Activated T-helper 2 cell treated with anti-CD3 and anti-CD28 coated beads, Interferon-gamma antibody, Interleukin-2, Interleukin-4, amounts not matched to agents 10 μg/mL and 5 μg/mL and 100 μg/mL, durations not matched to agents 14 hours and 24 hours and 36 hours (primary cell): ENCODE measurements at regions of chr1 and their contacts with region 1.

Region 1: GRCh38 chr1:20194757-20195461 is 8.6 kb upstream of the PLA2G2C start:
- DNase-seq: peak; percentile 50
- H3K4me3 Mint-ChIP-seq: no peak overlapping the region
- H3K27ac Mint-ChIP-seq: no peak overlapping the region
- H3K4me1 Mint-ChIP-seq: no peaks in the 10 kb centered on the region
- H3K27me3 Mint-ChIP-seq: peaks cover 47% of the 10 kb centered on the region

Region 2: GRCh38 chr1:19918057-19918456 is 276.9 kb before region 1 on chr1:
- intact Hi-C with region 1: loop called (anchors 1 kb)
- DNase-seq: peak; percentile 61
- H3K4me3 Mint-ChIP-seq: no peak overlapping the region
- H3K27ac Mint-ChIP-seq: no peak overlapping the region
- H3K4me1 Mint-ChIP-seq: no peaks in the 10 kb centered on the region
- H3K27me3 Mint-ChIP-seq: no peaks in the 10 kb centered on the region

Region 3: DNA sequence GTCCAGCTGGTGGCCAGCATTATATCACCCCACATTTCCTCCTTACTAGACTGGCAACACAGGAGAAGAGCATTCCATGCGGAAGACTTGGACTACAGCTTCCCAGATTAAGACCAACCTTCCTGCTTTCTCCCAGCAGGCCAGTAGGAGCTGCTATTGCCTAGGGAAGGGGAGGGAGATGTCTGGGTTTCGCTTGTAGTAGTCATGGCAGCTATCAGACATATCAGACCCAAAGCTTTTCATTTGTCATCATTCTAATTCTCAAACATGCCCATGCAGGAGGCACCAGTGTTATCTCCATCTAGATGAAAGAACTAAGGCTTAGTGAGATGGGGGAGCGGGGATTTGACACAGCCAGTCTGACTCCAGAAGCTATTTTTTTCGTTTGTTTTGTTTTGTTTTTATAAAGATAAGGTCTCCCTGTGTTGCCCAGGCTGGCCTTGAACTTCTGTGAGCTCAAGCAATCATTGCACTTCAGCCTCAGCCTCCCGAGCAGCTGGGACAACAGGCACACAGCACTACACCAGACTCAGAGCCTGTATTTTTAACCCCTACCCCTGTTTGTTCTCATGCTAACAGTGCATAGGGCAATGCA is 220.0 kb before region 1 on chr1:
- intact Hi-C with region 1: loop called (anchors 2 kb)
- DNase-seq: peak; percentile 14
- H3K4me3 Mint-ChIP-seq: no peak overlapping the region
- H3K27ac Mint-ChIP-seq: no peak overlapping the region
- H3K4me1 Mint-ChIP-seq: peaks cover 4% of the 10 kb centered on the region
- H3K27me3 Mint-ChIP-seq: peaks cover 22% of the 10 kb centered on the region

Region 4: DNA sequence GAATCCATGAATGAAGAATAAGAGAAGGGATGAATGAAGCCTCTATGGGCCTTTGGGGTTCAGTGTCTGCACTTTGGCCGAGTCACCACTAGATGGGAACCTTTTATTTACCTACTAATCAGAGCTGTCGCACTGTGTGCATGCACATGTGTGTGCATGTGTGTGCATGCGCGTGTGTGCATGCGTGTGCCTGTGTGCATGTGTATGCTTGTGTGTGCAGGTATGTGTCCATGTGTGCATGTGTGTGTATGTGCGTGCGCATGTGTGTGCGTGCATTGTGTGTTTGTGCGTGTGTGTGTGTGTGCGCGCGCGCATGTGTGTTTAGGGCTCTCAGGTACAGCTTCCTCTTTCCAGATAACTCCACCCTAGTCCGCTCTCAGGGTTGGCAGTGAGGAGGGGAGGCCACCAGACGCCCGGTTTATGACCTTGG is 29.4 kb before region 1 on chr1:
- intact Hi-C with region 1: loop called (anchors 1 kb)
- DNase-seq: no peak
- H3K4me3 Mint-ChIP-seq: no peak overlapping the region
- H3K27ac Mint-ChIP-seq: no peak overlapping the region
- H3K4me1 Mint-ChIP-seq: no peaks in the 10 kb centered on the region
- H3K27me3 Mint-ChIP-seq: peaks cover 10% of the 10 kb centered on the region